Transverse colon (tissue), 4 donors: ENCODE measurements at regions of chr9 and their contacts with region 1.

Region 1: DNA sequence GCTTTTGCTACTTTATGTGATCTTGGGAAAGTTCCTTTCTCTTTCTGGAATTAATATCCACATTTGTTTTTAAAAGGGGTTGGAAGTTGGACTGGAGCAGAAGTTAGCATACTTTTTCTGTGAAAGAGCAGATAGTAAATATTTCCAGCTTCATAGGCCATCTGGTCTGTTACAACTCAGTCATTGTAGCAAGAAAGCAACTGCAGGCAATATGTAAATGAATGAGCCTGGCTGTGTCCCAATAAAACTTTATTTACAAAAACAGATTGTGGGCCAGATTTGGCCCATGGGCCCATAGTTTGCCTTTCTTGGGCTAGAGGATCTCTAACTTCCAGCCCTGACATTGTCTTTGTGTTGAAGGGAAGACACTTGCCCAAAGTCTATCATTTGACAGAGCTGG is 104.4 kb downstream of the ACTL7B start:
- DNase-seq: no peak
- H3K4me3 ChIP-seq: no peak overlapping the region
- H3K27ac ChIP-seq: no peak overlapping the region
- H3K4me1 ChIP-seq: peaks cover 0 to 9% (median 2%) of the 10 kb centered on the region in 4 donors
- H3K27me3 ChIP-seq: no peaks in the 10 kb centered on the region
- CTCF ChIP-seq: no peak
- EP300 ChIP-seq: no peak
- POLR2A ChIP-seq: no peak

Region 2: GRCh38 chr9:108543251-108543768 is 208.1 kb before region 1 on chr9:
- in situ Hi-C with region 1: no loop called
- intact Hi-C with region 1: loop called (anchors 5 kb)
- DNase-seq: no peak
- H3K4me3 ChIP-seq: no peak overlapping the region
- H3K27ac ChIP-seq: no peak overlapping the region
- H3K4me1 ChIP-seq: no peaks in the 10 kb centered on the region
- H3K27me3 ChIP-seq: no peaks in the 10 kb centered on the region
- CTCF ChIP-seq: no peak
- EP300 ChIP-seq: no peak
- POLR2A ChIP-seq: no peak

Region 3: GRCh38 chr9:108793573-108793972 is 42.2 kb after region 1 on chr9:
- in situ Hi-C with region 1: no loop called
- intact Hi-C with region 1: no loop called
- DNase-seq: no peak
- H3K4me3 ChIP-seq: no peak overlapping the region
- H3K27ac ChIP-seq: no peak overlapping the region
- H3K4me1 ChIP-seq: no peaks in the 10 kb centered on the region
- H3K27me3 ChIP-seq: no peaks in the 10 kb centered on the region
- CTCF ChIP-seq: no peak
- EP300 ChIP-seq: no peak
- POLR2A ChIP-seq: no peak